Panc1 (cell line): ENCODE measurements at regions of chr10 and their contacts with region 1.

Region 1: DNA sequence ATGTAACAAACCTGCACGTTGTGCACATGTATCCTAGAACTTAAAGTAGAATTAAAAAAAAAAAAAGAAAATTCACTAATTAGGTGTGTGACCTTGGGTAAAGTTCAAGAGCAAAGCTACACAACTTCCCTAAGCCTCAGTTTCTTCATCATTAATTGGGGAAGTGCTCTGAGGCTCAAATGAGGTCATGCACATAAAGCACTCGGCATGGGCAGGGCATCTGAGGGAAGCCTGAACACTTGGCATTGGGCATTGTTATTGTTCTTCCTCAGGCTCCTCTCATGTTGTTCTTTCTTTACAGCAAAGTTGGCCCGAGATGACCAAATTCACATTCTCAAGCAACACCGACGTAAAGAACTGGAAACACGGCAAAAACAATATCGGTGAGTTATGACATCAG is 21.5 kb downstream of the ALOX5 start:
- DNase-seq: no peak
- ATAC-seq: no peak
- H3K4me3 ChIP-seq: no peak overlapping the region
- H3K27ac ChIP-seq: no peak overlapping the region
- H3K4me1 ChIP-seq: no peaks in the 10 kb centered on the region
- H3K27me3 ChIP-seq: peaks cover 13% of the 10 kb centered on the region; the same call in 1 of the 2 replicates
- CTCF ChIP-seq: no peak

Region 2: DNA sequence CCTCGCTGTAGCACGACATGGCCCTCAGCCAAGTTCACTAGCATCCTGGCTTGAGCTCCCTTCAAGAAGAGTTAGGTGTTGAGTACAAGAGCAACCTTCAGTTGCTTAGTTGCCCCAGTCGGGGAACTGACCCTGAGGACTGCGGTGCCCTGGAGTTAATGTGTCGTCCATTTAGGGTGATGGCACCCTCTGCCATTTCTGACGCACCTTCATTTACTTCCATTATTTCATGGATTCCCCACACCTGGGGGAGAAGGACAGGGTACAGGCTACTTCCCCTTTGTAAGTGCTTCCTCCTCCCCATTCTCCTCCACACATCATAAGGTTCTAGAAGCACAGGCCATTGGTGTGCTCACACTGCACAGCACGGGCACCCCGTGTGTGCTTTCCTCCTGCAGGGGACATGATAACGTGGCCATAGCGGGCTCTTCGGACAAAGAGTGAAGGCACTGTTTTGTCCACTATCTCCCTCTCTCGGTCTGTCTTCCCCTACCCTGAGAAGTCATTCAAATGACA is 19.8 kb before region 1 on chr10:
- CTCF ChIA-PET with region 1: no interaction called
- POLR2A ChIA-PET with region 1: no interaction called
- in situ Hi-C with region 1: no loop called
- intact Hi-C with region 1: loop called (anchors 2 kb)
- DNase-seq: no peak
- ATAC-seq: no peak
- H3K4me3 ChIP-seq: no peak overlapping the region
- H3K27ac ChIP-seq: no peak overlapping the region
- H3K4me1 ChIP-seq: no peaks in the 10 kb centered on the region
- H3K27me3 ChIP-seq: peaks cover 38% of the 10 kb centered on the region
- CTCF ChIP-seq: no peak

Region 3: GRCh38 chr10:45602082-45602730 is 206.7 kb after region 1 on chr10:
- CTCF ChIA-PET with region 1: no interaction called
- POLR2A ChIA-PET with region 1: no interaction called
- in situ Hi-C with region 1: no loop called
- intact Hi-C with region 1: no loop called
- DNase-seq: no peak
- ATAC-seq: no peak
- H3K4me3 ChIP-seq: no peak overlapping the region
- H3K27ac ChIP-seq: no peak overlapping the region; the same call in 1 of the 2 replicates
- H3K4me1 ChIP-seq: no peaks in the 10 kb centered on the region
- H3K27me3 ChIP-seq: no peaks in the 10 kb centered on the region
- CTCF ChIP-seq: no peak